Mammary epithelial cell (primary cell): ENCODE measurements at regions of chr6 and their contacts with region 1.

Region 1: DNA sequence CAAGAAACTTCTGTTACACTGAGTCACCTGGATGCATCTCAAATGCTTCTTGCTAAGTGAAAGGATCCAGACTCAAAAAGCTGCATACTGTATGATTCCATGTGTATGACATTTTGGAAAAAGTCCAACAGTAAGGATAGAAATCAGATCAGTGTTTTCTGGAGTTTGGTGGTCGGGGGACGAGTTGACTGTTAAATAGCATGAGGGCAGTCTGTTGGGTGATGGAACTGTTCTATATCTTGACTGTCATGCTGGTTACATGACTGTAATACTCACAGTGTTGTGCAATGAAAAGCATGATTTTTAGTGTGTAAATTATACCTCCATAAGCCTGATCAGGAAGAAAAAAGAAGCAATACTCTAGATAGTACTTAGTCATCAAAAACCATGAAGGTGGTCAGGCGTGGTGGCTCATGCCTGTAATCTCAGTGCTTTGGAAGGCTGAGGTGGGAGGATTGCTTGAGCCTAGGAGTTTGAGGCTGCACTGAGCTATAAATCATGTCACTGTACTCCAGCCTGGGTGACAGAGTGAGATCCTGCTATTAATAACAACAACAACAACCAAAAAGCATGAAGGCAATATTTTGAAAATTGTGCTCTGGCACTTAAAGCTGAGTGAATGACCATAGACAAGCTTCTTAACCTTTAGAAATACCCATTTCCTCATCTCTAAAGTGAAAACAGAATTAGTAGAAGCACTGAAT is 30.5 kb upstream of the SASH1 start:
- DNase-seq: no peak
- H3K4me3 ChIP-seq: no peak overlapping the region
- H3K27ac ChIP-seq: no peak overlapping the region
- H3K4me1 ChIP-seq: no peaks in the 10 kb centered on the region
- H3K27me3 ChIP-seq: no peaks in the 10 kb centered on the region
- CTCF ChIP-seq: no peak

Region 2: GRCh38 chr6:148414836-148415235 is 102.7 kb after region 1 on chr6:
- CTCF ChIA-PET with region 1: no interaction called
- dilution Hi-C with region 1: loop called (anchors 5 kb)
- in situ Hi-C with region 1: no loop called
- intact Hi-C with region 1: no loop called
- DNase-seq: peak; percentile 53
- H3K4me3 ChIP-seq: no peak overlapping the region
- H3K27ac ChIP-seq: no peak overlapping the region
- H3K4me1 ChIP-seq: peaks cover 20% of the 10 kb centered on the region
- H3K27me3 ChIP-seq: no peaks in the 10 kb centered on the region
- CTCF ChIP-seq: no peak